Transverse colon (tissue), 4 donors: ENCODE measurements at regions of chr12 and their contacts with region 1.

Region 1: GRCh38 chr12:102728506-102729242 is 188.4 kb downstream of the PAH start:
- DNase-seq: no peak
- H3K4me3 ChIP-seq: no peak overlapping the region
- H3K27ac ChIP-seq: no peak overlapping the region
- H3K4me1 ChIP-seq: no peaks in the 10 kb centered on the region
- H3K27me3 ChIP-seq: no peaks in the 10 kb centered on the region
- CTCF ChIP-seq: no peak
- EP300 ChIP-seq: no peak
- POLR2A ChIP-seq: no peak

Region 2: DNA sequence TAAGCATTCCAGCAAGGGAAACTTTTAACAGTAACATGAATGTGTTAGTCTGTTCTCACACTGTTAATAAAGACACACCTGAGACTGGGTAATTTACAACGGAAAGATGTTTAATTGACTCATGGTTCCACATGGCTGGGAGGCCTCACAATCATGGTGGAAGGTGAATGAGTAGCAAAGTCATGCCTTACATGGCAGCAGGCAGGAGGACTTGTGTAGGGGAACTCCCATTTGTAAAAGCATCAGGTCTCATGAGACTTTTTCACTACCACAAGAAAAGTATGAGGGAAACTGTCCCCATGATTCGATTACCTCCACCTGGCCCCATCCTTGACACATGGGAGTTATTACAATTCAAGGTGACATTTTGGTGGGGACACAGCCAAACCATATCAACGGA is 20.0 kb after region 1 on chr12:
- in situ Hi-C with region 1: no loop called
- intact Hi-C with region 1: loop called (anchors 1 kb)
- DNase-seq: no peak
- H3K4me3 ChIP-seq: no peak overlapping the region
- H3K27ac ChIP-seq: no peak overlapping the region
- H3K4me1 ChIP-seq: no peaks in the 10 kb centered on the region
- H3K27me3 ChIP-seq: no peaks in the 10 kb centered on the region
- CTCF ChIP-seq: no peak
- EP300 ChIP-seq: no peak
- POLR2A ChIP-seq: no peak

Region 3: GRCh38 chr12:102980350-102980749 is 251.7 kb after region 1 on chr12:
- in situ Hi-C with region 1: no loop called
- intact Hi-C with region 1: no loop called
- DNase-seq: no peak
- H3K4me3 ChIP-seq: no peak overlapping the region
- H3K27ac ChIP-seq: no peak overlapping the region
- H3K4me1 ChIP-seq: no peaks in the 10 kb centered on the region
- H3K27me3 ChIP-seq: no peaks in the 10 kb centered on the region
- CTCF ChIP-seq: no peak
- EP300 ChIP-seq: no peak
- POLR2A ChIP-seq: no peak